ENCODE measurements at regions of chr21 and their contacts with region 1.

Region 1: GRCh38 chr21:30634906-30635305 is at the start of gene KRTAP20-2:
- DNase-seq: no peak
- ATAC-seq: no peak
- H3K4me3 ChIP-seq: no peak within 1 kb of the TSS
- H3K27ac ChIP-seq: no peak within 1 kb of the TSS
- H3K4me1 ChIP-seq: no peaks in the 10 kb centered on the region
- H3K27me3 ChIP-seq: no peaks in the 10 kb centered on the region
- CTCF ChIP-seq: no peak
- POLR2A ChIP-seq: no peak
- total RNA-seq, gene KRTAP20-2: not detected

Region 2: GRCh38 chr21:30695956-30696355 is 61.0 kb after region 1 on chr21:
- in situ Hi-C with region 1: loop called in 1 of 4 experiments (anchors 10 kb)
- intact Hi-C with region 1: no loop called
- DNase-seq: no peak
- ATAC-seq: no peak
- H3K4me3 ChIP-seq: no peak overlapping the region
- H3K27ac ChIP-seq: no peak overlapping the region
- H3K4me1 ChIP-seq: no peaks in the 10 kb centered on the region
- H3K27me3 ChIP-seq: no peaks in the 10 kb centered on the region
- CTCF ChIP-seq: no peak
- POLR2A ChIP-seq: no peak

Measured in gastrocnemius medialis (tissue), 4 donors.